B cell (primary cell): ENCODE measurements at regions of chr7 and their contacts with region 1.

Region 1: GRCh38 chr7:93551063-93551904 is 23.2 kb downstream of the CALCR start:
- DNase-seq: peak; percentile 46
- ATAC-seq: no peak
- H3K4me3 ChIP-seq: no peak overlapping the region
- H3K4me3 Mint-ChIP-seq: no peak overlapping the region
- H3K27ac ChIP-seq: no peak overlapping the region
- H3K27ac Mint-ChIP-seq: no peak overlapping the region
- H3K4me1 ChIP-seq: no peaks in the 10 kb centered on the region
- H3K4me1 Mint-ChIP-seq: no peaks in the 10 kb centered on the region
- H3K27me3 ChIP-seq: no peaks in the 10 kb centered on the region
- H3K27me3 Mint-ChIP-seq: peaks cover 14% of the 10 kb centered on the region
- CTCF ChIP-seq: peak; percentile 72

Region 2: DNA sequence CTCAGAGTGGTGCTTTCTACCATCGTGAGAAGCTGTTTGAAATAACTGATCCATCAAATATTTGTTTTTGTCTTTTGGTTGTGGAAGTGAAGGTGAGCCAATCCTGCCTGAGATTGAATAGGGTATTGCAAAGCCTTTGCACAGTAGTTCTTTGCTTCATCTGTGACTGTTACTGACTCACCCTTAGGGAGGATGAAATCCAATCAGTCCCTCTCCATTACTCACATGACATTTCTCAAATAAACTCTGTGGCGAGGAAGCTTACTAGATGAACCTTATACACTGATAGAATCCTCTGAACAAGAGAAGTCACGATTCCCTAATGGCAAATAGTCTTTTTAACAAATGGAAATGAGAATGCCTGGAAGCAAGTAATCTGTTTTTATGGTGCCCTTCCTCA is 356.9 kb before region 1 on chr7:
- CTCF ChIA-PET with region 1: no interaction called
- POLR2A ChIA-PET with region 1: no interaction called
- intact Hi-C with region 1: no loop called
- DNase-seq: no peak
- ATAC-seq: no peak
- H3K4me3 ChIP-seq: no peak overlapping the region
- H3K4me3 Mint-ChIP-seq: no peak overlapping the region
- H3K27ac ChIP-seq: no peak overlapping the region
- H3K27ac Mint-ChIP-seq: no peak overlapping the region
- H3K4me1 ChIP-seq: peaks cover 0 to 6% of the 10 kb centered on the region in 2 donors
- H3K4me1 Mint-ChIP-seq: peaks cover 7% of the 10 kb centered on the region
- H3K27me3 ChIP-seq: peaks cover 0 to 14% (median 0%) of the 10 kb centered on the region in 4 experiments
- H3K27me3 Mint-ChIP-seq: peaks cover 35% of the 10 kb centered on the region
- CTCF ChIP-seq: no peak

Region 3: GRCh38 chr7:93245525-93246432 is 305.5 kb before region 1 on chr7:
- CTCF ChIA-PET with region 1: interaction called, 31 read pairs
- POLR2A ChIA-PET with region 1: no interaction called
- intact Hi-C with region 1: no loop called
- DNase-seq: peak; percentile 54
- ATAC-seq: peak; percentile 28
- H3K4me3 ChIP-seq: no peak overlapping the region
- H3K4me3 Mint-ChIP-seq: no peak overlapping the region
- H3K27ac ChIP-seq: no peak overlapping the region
- H3K27ac Mint-ChIP-seq: no peak overlapping the region
- H3K4me1 ChIP-seq: no peaks in the 10 kb centered on the region
- H3K4me1 Mint-ChIP-seq: peaks cover 6% of the 10 kb centered on the region
- H3K27me3 ChIP-seq: no peaks in the 10 kb centered on the region
- H3K27me3 Mint-ChIP-seq: no peaks in the 10 kb centered on the region
- CTCF ChIP-seq: peak; percentile 86

Region 4: DNA sequence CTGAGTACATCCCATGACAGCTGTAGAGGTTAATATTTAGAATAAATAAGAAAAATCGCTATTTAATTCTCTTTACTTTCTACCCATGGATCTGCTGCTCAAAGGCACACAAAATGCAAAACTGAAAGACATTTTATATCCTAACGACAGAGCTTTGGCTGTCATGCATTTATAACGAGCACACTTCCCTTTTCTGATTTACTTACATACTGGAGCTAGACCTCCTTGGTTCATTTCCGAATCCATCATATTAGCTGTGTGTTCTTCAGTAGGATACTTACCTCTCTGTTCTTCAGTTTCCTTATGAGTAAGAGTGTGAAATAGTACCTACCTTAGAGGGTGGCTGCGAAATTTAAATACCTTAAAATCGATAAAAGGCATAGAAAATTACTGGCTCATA is 12.3 kb after region 1 on chr7:
- CTCF ChIA-PET with region 1: interaction called, 16 read pairs
- POLR2A ChIA-PET with region 1: no interaction called
- intact Hi-C with region 1: no loop called
- DNase-seq: peak; percentile 24
- ATAC-seq: no peak
- H3K4me3 ChIP-seq: no peak overlapping the region
- H3K4me3 Mint-ChIP-seq: peak overlapping the region; percentile 35
- H3K27ac ChIP-seq: no peak overlapping the region
- H3K27ac Mint-ChIP-seq: no peak overlapping the region
- H3K4me1 ChIP-seq: peaks cover 26 to 35% of the 10 kb centered on the region in 2 donors
- H3K4me1 Mint-ChIP-seq: peaks cover 39% of the 10 kb centered on the region
- H3K27me3 ChIP-seq: no peaks in the 10 kb centered on the region
- H3K27me3 Mint-ChIP-seq: no peaks in the 10 kb centered on the region
- CTCF ChIP-seq: no peak